Left ventricle myocardium inferior (tissue), 1 donor: ENCODE measurements at regions of chr18 and their contacts with region 1.

Region 1: GRCh38 chr18:79395761-79396387 is at the start of gene NFATC1:
- DNase-seq: peak; percentile 86
- H3K4me3 ChIP-seq: peak within 1 kb of the TSS; percentile 80
- H3K27ac ChIP-seq: peak within 1 kb of the TSS; percentile 98
- H3K4me1 ChIP-seq: peaks cover 53% of the 10 kb centered on the region
- H3K27me3 ChIP-seq: peaks cover 9% of the 10 kb centered on the region
- CTCF ChIP-seq: no peak
- total RNA-seq, gene NFATC1: 18.3 TPM

Region 2: GRCh38 chr18:79169958-79170555 is 225.8 kb before region 1 on chr18:
- intact Hi-C with region 1: no loop called
- DNase-seq: no peak
- H3K4me3 ChIP-seq: no peak overlapping the region
- H3K27ac ChIP-seq: no peak overlapping the region
- H3K4me1 ChIP-seq: peaks cover 23% of the 10 kb centered on the region
- H3K27me3 ChIP-seq: no peaks in the 10 kb centered on the region
- CTCF ChIP-seq: no peak

Region 3: DNA sequence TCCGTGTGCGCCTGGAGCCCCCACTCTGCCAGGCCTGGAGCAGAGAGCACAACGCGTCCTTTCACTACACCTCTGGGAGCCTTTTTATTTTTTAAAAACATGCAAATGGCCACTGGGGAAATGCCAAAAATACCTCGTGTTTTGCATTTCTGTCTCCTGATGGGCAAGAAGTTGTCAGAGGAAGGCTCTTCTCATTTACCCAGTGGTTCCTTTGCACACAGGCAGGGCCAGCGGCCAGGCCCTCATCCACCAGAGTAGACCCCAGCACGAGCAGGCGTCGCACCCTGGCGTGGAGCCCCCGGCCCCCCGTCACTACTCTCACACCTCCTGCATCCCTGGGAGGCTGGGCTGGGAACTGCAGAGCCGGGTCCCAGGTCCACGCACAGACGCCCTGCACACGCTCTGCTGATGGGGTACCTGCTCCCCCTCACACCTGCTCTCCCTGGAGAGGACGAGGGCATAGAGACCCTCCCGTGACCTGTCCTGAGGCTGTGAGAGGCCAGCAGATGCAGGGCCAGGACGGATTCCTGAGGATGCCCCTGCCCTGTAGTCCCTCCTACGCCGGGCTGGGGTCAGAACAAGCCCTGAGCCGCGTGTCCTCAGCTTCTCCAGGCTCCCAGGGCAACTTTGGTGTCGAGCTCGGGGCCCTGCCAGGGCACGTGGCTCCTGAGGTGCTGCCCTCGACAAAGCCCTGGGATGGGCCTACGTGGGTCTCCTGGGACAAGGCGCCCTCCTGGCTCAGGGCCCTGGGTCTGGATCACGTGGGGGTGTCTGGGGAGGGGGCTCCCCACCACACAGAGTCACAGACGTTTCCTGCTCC is 64.8 kb after region 1 on chr18:
- intact Hi-C with region 1: loop called (anchors 5 kb)
- DNase-seq: no peak
- H3K4me3 ChIP-seq: no peak overlapping the region
- H3K27ac ChIP-seq: peak overlapping the region; percentile 89
- H3K4me1 ChIP-seq: peaks cover 45% of the 10 kb centered on the region
- H3K27me3 ChIP-seq: no peaks in the 10 kb centered on the region
- CTCF ChIP-seq: no peak